ENCODE measurements at regions of chr7 and their contacts with region 1.

Region 1: DNA sequence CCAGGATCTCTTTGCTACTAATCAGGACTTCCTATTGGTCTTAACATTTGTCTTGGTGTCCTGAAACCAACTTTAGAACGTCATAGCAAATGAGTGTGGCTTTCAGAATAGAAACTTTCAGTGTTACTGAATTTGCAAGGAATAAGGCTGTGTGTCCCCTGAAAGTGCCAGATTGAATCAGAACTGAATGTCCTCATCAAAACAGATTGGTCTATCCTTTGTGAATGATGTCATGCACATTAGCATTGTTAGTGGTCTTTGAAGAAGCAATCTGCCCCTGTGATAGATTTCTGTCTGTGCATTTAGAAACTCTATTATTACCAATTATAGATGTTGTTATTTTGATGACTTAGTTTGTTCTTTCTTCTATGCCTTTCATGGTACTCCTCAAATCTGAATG is 119.9 kb downstream of the AGMO start:
- DNase-seq: no peak
- H3K4me3 ChIP-seq: no peak overlapping the region
- H3K27ac ChIP-seq: no peak overlapping the region
- H3K4me1 ChIP-seq: no peaks in the 10 kb centered on the region
- H3K27me3 ChIP-seq: no peaks in the 10 kb centered on the region
- CTCF ChIP-seq: no peak
- POLR2A ChIP-seq: no peak

Region 2: DNA sequence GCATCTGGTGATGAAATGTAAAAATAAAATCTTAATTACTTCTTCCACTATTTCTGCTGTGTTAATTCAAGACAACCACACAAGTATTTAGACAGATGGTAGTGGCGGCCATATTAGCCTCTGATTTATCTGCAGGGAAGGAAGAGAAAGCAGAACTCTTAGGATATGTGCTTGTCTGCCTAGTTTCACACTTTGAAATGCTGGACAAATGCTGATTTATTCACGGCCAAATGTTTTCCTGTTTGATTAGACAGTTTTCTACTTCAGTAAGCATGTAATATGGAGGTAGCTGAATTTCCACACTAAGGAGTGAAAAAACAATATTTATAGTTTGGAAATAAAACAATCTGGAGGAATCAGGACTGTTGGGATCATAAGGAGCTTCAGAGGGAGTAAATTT is 38.2 kb before region 1 on chr7:
- intact Hi-C with region 1: loop called (anchors 2 kb)
- DNase-seq: no peak
- H3K4me3 ChIP-seq: no peak overlapping the region
- H3K27ac ChIP-seq: no peak overlapping the region
- H3K4me1 ChIP-seq: no peaks in the 10 kb centered on the region
- H3K27me3 ChIP-seq: no peaks in the 10 kb centered on the region
- CTCF ChIP-seq: no peak
- POLR2A ChIP-seq: no peak

Region 3: DNA sequence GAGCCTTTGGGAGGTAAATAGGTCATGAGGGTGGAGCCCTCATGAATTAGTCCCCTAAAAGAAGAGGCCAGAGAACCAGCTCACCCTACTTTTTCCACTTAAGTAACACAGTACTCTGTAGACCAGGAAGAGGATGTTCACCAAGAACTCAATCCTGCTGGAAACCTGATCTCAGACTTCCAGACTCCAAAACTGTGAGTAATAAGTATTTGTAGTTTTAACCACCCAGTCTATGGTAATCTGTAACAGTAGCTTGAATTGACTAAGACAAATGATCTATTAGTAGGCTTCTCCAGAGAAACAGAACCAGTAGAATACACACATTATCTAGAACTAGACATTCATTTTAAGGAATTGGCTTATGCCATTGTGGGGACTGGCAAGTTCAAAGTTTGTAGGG is 1152.1 kb after region 1 on chr7:
- intact Hi-C with region 1: no loop called
- DNase-seq: no peak
- H3K4me3 ChIP-seq: no peak overlapping the region
- H3K27ac ChIP-seq: no peak overlapping the region
- H3K4me1 ChIP-seq: no peaks in the 10 kb centered on the region
- H3K27me3 ChIP-seq: no peaks in the 10 kb centered on the region
- CTCF ChIP-seq: no peak
- POLR2A ChIP-seq: no peak